Naive thymus-derived CD4-positive, alpha-beta T cell (primary cell): ENCODE measurements at regions of chr20 and their contacts with region 1.

Region 1: GRCh38 chr20:41738604-41739206 is 120.5 kb upstream of the CHD6 start:
- DNase-seq: peak in 4 of 9 donors; percentile 3 to 25 (median 14)
- ATAC-seq: peak; percentile 61
- H3K4me3 ChIP-seq: no peak overlapping the region
- H3K4me3 Mint-ChIP-seq: no peak overlapping the region
- H3K27ac ChIP-seq: no peak overlapping the region
- H3K27ac Mint-ChIP-seq: no peak overlapping the region
- H3K4me1 ChIP-seq: no peaks in the 10 kb centered on the region
- H3K4me1 Mint-ChIP-seq: no peaks in the 10 kb centered on the region
- H3K27me3 ChIP-seq: no peaks in the 10 kb centered on the region
- H3K27me3 Mint-ChIP-seq: no peaks in the 10 kb centered on the region

Region 2: GRCh38 chr20:43408848-43409576 is 1670.3 kb after region 1 on chr20:
- CTCF ChIA-PET with region 1: no interaction called
- POLR2A ChIA-PET with region 1: no interaction called
- intact Hi-C with region 1: loop called in 1 of 2 experiments (anchors 5 kb)
- DNase-seq: no peak
- ATAC-seq: no peak
- H3K4me3 ChIP-seq: no peak overlapping the region
- H3K4me3 Mint-ChIP-seq: no peak overlapping the region
- H3K27ac ChIP-seq: no peak overlapping the region
- H3K27ac Mint-ChIP-seq: no peak overlapping the region
- H3K4me1 ChIP-seq: no peaks in the 10 kb centered on the region
- H3K4me1 Mint-ChIP-seq: no peaks in the 10 kb centered on the region
- H3K27me3 ChIP-seq: peaks cover 0 to 8% of the 10 kb centered on the region in 2 donors
- H3K27me3 Mint-ChIP-seq: peaks cover 18 to 77% (median 70%) of the 10 kb centered on the region in 5 donors